Body of pancreas (tissue), 4 donors: ENCODE measurements at regions of chr2 and their contacts with region 1.

Region 1: GRCh38 chr2:70142590-70143313 is 48.1 kb downstream of the C2orf42 start:
- DNase-seq: peak; percentile 99 to 100 (median 100)
- ATAC-seq: peak; percentile 78
- H3K4me3 ChIP-seq: no peak overlapping the region
- H3K27ac ChIP-seq: peak overlapping the region; percentile 99 to 100 (median 100)
- H3K4me1 ChIP-seq: peaks cover 34% of the 10 kb centered on the region
- H3K27me3 ChIP-seq: no peaks in the 10 kb centered on the region
- CTCF ChIP-seq: peak; percentile 92 to 100 (median 100)
- POLR2A ChIP-seq: peak; percentile 33 to 82 (median 70)

Region 2: DNA sequence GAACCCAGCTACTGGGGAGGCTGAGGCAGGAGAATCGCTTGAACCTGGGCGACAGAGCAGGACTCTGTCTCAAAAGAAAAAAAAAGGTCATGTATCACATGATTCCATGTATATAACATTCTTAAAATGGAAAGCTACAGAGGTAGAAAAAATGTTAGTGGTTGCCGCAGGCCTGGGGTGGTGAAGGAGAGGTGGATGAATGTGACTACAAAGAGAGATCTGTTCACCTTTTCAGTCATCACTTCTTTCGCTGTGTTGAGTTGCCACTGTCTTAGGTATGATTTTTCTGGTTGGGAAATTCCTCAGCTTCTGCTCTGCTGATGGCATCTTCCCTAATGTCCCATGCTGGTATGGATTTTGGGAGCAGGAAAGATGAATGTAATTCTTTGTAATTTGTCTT is 254.3 kb before region 1 on chr2:
- intact Hi-C with region 1: no loop called
- DNase-seq: no peak
- ATAC-seq: no peak
- H3K4me3 ChIP-seq: no peak overlapping the region
- H3K27ac ChIP-seq: no peak overlapping the region
- H3K4me1 ChIP-seq: peaks cover 2% of the 10 kb centered on the region
- H3K27me3 ChIP-seq: no peaks in the 10 kb centered on the region
- CTCF ChIP-seq: no peak
- POLR2A ChIP-seq: no peak

Region 3: GRCh38 chr2:70086838-70087701 is 55.7 kb before region 1 on chr2 and contains the start of gene PCBP1:
- intact Hi-C with region 1: loop called (anchors 10 kb)
- DNase-seq: peak; percentile 96 to 97 (median 96)
- ATAC-seq: peak; percentile 87
- H3K4me3 ChIP-seq: peak within 1 kb of the TSS; percentile 69 to 85
- H3K27ac ChIP-seq: peak within 1 kb of the TSS; percentile 96 to 100 (median 100)
- H3K4me1 ChIP-seq: peaks cover 46% of the 10 kb centered on the region
- H3K27me3 ChIP-seq: no peaks in the 10 kb centered on the region
- CTCF ChIP-seq: peak in 1 of 7 experiments; percentile 0
- POLR2A ChIP-seq: peak; percentile 88 to 95 (median 93)
- total RNA-seq, gene PCBP1: 97.9 to 128 TPM

Region 4: DNA sequence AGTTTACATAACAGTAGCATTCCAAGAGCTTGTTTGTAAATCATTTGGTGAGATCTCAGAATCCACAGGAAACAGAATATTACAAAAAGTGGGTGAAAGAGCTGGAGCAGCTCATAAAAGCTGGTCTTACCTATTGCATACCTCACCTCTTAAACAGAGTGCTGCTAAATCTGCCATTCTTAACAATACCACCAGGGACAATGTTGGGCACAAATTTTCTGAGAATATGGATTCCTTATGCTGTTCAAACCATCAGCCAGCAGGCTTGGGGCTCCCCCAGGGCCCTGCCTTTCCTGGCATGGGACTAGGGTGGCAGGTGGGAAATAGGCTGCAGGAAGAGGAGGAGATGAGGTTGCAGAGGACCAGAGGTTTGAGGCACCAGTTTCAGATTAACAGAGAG is 355.3 kb after region 1 on chr2:
- intact Hi-C with region 1: no loop called
- DNase-seq: no peak
- ATAC-seq: no peak
- H3K4me3 ChIP-seq: no peak overlapping the region
- H3K27ac ChIP-seq: no peak overlapping the region
- H3K4me1 ChIP-seq: no peaks in the 10 kb centered on the region
- H3K27me3 ChIP-seq: no peaks in the 10 kb centered on the region
- CTCF ChIP-seq: peak in 5 of 7 experiments; percentile 7 to 26 (median 15)
- POLR2A ChIP-seq: no peak